Activated CD4-positive, alpha-beta memory T cell treated with anti-CD3 and anti-CD28 coated beads, Interleukin-2, amount 10 ng/mL, durations not matched to agents 7 days and 5 days (primary cell): ENCODE measurements at regions of chr3 and their contacts with region 1.

Region 1: DNA sequence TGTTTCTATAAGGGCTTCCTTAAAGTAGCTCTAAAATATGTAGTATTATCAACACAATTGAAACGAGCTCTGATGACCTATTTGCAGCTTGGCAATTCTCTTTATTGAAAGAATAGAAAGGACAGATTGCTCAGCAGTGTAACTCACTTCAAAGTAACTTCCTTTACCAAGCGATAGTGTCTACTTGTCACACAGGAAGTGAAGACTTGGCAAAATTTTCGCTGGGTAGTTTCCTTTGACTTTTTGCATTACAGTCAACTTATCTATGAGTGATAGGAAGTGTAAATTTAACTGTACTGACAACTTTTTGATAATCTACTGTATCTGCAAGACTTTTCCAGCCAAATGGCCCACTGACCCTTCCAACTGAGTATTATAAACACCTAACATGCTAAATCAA is 22.8 kb downstream of the SLC9A9 start:
- DNase-seq: peak; percentile 26
- H3K4me3 Mint-ChIP-seq: peak overlapping the region; percentile 18
- H3K27ac Mint-ChIP-seq: peak overlapping the region; percentile 78
- H3K4me1 Mint-ChIP-seq: peaks cover 56% of the 10 kb centered on the region
- H3K27me3 Mint-ChIP-seq: no peaks in the 10 kb centered on the region

Region 2: DNA sequence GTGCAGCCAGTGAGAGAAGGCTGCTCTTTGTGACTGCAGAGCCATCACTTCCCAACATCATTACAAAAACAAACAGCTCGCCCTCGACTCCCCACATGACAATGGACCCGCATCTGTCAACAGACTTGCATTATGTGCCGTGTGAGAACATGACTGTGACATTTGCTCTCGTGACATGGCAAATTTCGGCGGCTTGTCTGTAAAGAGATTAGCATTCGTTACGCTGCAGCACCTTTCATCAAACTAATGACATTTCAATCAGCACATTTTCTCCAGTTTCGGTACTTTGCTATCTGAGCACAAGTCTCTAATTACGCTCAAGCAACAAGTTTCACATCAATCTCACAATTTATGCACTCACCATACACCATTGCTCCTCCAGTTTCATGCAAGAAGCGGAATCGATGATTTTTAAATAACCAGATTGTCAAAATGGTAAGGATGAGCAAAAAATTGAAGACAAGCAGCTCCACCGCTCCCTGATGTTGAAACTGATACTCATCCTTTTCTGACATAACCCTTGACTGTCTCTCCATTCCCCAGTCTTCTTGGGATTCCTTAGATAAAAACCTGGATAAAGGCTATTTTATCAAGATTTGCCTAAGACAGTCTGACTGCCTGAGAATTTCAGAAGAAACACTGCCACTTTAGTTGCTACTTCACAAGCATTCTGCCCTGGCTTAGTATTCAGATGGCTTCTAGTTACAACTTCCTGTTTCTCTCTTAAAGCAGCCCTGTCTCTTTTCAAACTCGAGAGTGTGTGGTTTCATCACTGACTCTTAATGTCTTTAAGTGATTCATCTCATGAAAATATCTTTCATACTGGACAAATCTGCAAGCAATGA is 22.5 kb after region 1 on chr3 and contains the start of gene SLC9A9:
- CTCF ChIA-PET with region 1: no interaction called
- POLR2A ChIA-PET with region 1: interaction called, 11 read pairs
- DNase-seq: peak; percentile 53
- H3K4me3 Mint-ChIP-seq: peak within 1 kb of the TSS; percentile 95
- H3K27ac Mint-ChIP-seq: peak within 1 kb of the TSS; percentile 93
- H3K4me1 Mint-ChIP-seq: peaks cover 53% of the 10 kb centered on the region
- H3K27me3 Mint-ChIP-seq: no peaks in the 10 kb centered on the region
- total RNA-seq, gene SLC9A9: 16.9 to 18.5 TPM

Region 3: GRCh38 chr3:143951351-143951971 is 125.9 kb after region 1 on chr3:
- CTCF ChIA-PET with region 1: no interaction called
- POLR2A ChIA-PET with region 1: no interaction called
- DNase-seq: peak; percentile 33
- H3K4me3 Mint-ChIP-seq: no peak overlapping the region
- H3K27ac Mint-ChIP-seq: no peak overlapping the region
- H3K4me1 Mint-ChIP-seq: peaks cover 1% of the 10 kb centered on the region
- H3K27me3 Mint-ChIP-seq: peaks cover 12% of the 10 kb centered on the region